ENCODE measurements at regions of chr20 and their contacts with region 1.

Region 1: GRCh38 chr20:60210779-60211617 is 252.8 kb downstream of the CDH26 start:
- DNase-seq: peak; percentile 63 to 74
- ATAC-seq: peak; percentile 78 to 85 (median 81)
- H3K4me3 ChIP-seq: no peak overlapping the region
- H3K4me3 Mint-ChIP-seq: peak overlapping the region; percentile 41
- H3K27ac ChIP-seq: no peak overlapping the region
- H3K27ac Mint-ChIP-seq: peak overlapping the region in 1 of 2 donors; percentile 31
- H3K4me1 ChIP-seq: peaks cover 10% of the 10 kb centered on the region
- H3K4me1 Mint-ChIP-seq: peaks cover 42 to 55% of the 10 kb centered on the region in 2 donors
- H3K27me3 ChIP-seq: no peaks in the 10 kb centered on the region
- H3K27me3 Mint-ChIP-seq: no peaks in the 10 kb centered on the region
- CTCF ChIP-seq: peak; percentile 92

Region 2: GRCh38 chr20:60009826-60010616 is 201.0 kb before region 1 on chr20:
- intact Hi-C with region 1: no loop called
- DNase-seq: no peak
- ATAC-seq: no peak
- H3K4me3 ChIP-seq: no peak overlapping the region
- H3K4me3 Mint-ChIP-seq: peak overlapping the region; percentile 88
- H3K27ac ChIP-seq: no peak overlapping the region
- H3K27ac Mint-ChIP-seq: peak overlapping the region; percentile 63
- H3K4me1 ChIP-seq: peaks cover 33% of the 10 kb centered on the region
- H3K4me1 Mint-ChIP-seq: peaks cover 35 to 41% of the 10 kb centered on the region in 2 donors
- H3K27me3 ChIP-seq: peaks cover 2% of the 10 kb centered on the region
- H3K27me3 Mint-ChIP-seq: peaks cover 17 to 18% of the 10 kb centered on the region in 2 donors
- CTCF ChIP-seq: no peak

Region 3: DNA sequence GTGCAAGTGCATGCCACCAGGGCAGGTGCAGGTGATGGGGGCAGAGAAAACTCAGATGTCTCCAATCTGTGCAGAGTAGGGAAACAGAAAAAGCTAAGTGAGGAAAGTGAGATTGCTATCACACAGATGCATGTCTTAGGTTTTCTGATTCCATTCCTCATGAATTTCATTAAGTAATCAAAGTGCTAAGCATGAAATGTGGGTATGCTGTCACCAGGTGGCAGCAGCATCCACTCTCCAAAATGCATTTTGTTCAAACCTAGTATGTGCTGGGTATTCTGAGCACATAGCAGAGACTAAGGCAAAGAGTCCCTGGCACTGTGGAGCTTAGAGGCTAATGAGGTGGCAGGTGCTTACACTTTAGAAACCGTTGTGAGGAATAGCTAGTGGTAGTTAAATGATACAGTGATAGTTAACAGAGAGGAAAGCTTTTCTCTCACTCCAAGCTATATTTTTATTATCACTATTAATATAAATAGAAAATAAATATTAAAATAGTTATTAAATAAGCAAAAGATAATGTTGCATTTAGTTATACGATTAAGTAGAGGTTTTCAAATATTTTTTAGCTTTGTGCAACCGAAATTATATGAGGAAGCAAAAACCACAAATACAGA is 73.3 kb before region 1 on chr20:
- intact Hi-C with region 1: loop called (anchors 5 kb)
- DNase-seq: peak in 1 of 2 donors; percentile 52
- ATAC-seq: peak; percentile 51 to 85 (median 80)
- H3K4me3 ChIP-seq: peak overlapping the region; percentile 14
- H3K4me3 Mint-ChIP-seq: peak overlapping the region; percentile 96
- H3K27ac ChIP-seq: no peak overlapping the region
- H3K27ac Mint-ChIP-seq: peak overlapping the region in 1 of 2 donors; percentile 49
- H3K4me1 ChIP-seq: peaks cover 17% of the 10 kb centered on the region
- H3K4me1 Mint-ChIP-seq: peaks cover 51 to 56% of the 10 kb centered on the region in 2 donors
- H3K27me3 ChIP-seq: no peaks in the 10 kb centered on the region
- H3K27me3 Mint-ChIP-seq: no peaks in the 10 kb centered on the region
- CTCF ChIP-seq: peak; percentile 71

Region 4: DNA sequence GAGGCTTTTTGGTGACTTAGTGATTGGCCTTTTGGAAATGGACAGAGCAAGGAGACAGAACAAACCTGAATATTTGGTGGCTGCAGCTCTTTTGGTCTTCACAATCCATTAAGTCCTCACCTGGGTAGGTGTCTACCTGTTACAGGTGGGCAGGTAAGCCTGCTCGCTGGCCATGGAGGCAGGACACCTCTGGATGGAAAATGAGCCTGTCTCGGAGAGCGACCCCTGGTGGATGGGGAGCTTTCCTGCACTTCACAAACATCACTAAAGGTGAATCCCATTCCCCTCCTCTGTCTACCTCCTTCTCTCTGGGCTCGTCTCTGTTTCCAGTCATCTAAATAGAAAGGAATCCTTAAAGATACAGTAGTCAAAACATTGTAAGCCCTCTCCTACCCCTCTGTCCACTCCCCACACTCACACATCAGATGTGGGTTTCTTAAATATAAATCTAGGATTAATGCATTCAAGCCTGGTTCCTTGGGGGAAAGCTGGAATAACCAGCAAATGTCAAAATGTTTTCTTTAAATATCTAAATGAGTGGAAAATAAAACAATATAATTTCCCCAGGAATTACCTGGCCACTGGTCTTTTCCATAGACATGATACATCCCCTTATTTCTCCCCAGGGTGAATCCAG is 52.1 kb after region 1 on chr20:
- intact Hi-C with region 1: loop called (anchors 1 kb)
- DNase-seq: peak; percentile 56 to 76
- ATAC-seq: peak; percentile 60 to 80 (median 64)
- H3K4me3 ChIP-seq: no peak overlapping the region
- H3K4me3 Mint-ChIP-seq: no peak overlapping the region
- H3K27ac ChIP-seq: no peak overlapping the region
- H3K27ac Mint-ChIP-seq: no peak overlapping the region
- H3K4me1 ChIP-seq: no peaks in the 10 kb centered on the region
- H3K4me1 Mint-ChIP-seq: no peaks in the 10 kb centered on the region
- H3K27me3 ChIP-seq: no peaks in the 10 kb centered on the region
- H3K27me3 Mint-ChIP-seq: no peaks in the 10 kb centered on the region
- CTCF ChIP-seq: peak; percentile 94

Region 5: GRCh38 chr20:61120595-61121515 is 909.9 kb after region 1 on chr20:
- intact Hi-C with region 1: loop called (anchors 5 kb)
- DNase-seq: peak in 1 of 2 donors; percentile 57
- ATAC-seq: peak; percentile 36 to 76 (median 50)
- H3K4me3 ChIP-seq: no peak overlapping the region
- H3K4me3 Mint-ChIP-seq: no peak overlapping the region
- H3K27ac ChIP-seq: no peak overlapping the region
- H3K27ac Mint-ChIP-seq: no peak overlapping the region
- H3K4me1 ChIP-seq: no peaks in the 10 kb centered on the region
- H3K4me1 Mint-ChIP-seq: peaks cover 7% of the 10 kb centered on the region in 2 donors
- H3K27me3 ChIP-seq: no peaks in the 10 kb centered on the region
- H3K27me3 Mint-ChIP-seq: peaks cover 0 to 14% of the 10 kb centered on the region in 2 donors
- CTCF ChIP-seq: peak; percentile 26

Region 6: GRCh38 chr20:61234803-61235113 is 1023.8 kb after region 1 on chr20:
- intact Hi-C with region 1: loop called (anchors 2 kb)
- DNase-seq: no peak
- ATAC-seq: no peak
- H3K4me3 ChIP-seq: no peak overlapping the region
- H3K4me3 Mint-ChIP-seq: no peak overlapping the region
- H3K27ac ChIP-seq: no peak overlapping the region
- H3K27ac Mint-ChIP-seq: no peak overlapping the region
- H3K4me1 ChIP-seq: no peaks in the 10 kb centered on the region
- H3K4me1 Mint-ChIP-seq: no peaks in the 10 kb centered on the region
- H3K27me3 ChIP-seq: no peaks in the 10 kb centered on the region
- H3K27me3 Mint-ChIP-seq: peaks cover 6 to 17% of the 10 kb centered on the region in 2 donors
- CTCF ChIP-seq: no peak